ENCODE measurements at regions of chr2 and their contacts with region 1.

Region 1: DNA sequence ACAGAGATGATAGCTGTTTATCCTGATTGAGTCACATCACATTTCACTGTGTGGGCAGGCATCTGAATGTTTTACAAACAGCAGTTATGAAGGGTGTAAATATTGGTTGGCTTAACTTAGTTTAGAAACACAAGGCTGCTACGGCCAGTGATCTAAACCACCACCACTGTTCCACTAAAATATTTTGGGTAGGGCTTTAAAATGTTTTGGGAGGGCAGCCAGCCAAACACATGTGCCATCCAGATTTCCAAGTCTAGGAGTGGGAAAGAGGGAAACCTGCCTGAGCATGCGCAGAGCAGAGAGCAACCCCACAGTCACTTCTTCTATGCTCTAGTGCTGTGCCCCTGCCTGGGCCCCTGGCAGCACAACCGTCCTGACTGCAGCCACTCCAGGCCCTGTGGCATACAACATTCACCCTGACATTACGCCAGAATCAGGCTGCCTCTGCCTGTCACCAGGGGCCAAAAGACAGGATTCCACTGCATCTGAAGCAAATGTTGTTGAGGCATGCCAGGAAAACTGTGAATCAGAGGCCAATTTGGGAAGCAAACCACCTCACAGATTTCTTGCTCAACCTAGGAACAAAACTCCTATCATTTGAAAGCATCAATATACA is 74.8 kb upstream of the COL5A2 start:
- DNase-seq: peak; percentile 77 to 81
- ATAC-seq: peak; percentile 82
- H3K4me3 ChIP-seq: no peak overlapping the region
- H3K27ac ChIP-seq: peak overlapping the region in 1 of 2 donors; percentile 89
- H3K4me1 ChIP-seq: peaks cover 9 to 10% of the 10 kb centered on the region in 2 donors
- H3K27me3 ChIP-seq: no peaks in the 10 kb centered on the region

Region 2: DNA sequence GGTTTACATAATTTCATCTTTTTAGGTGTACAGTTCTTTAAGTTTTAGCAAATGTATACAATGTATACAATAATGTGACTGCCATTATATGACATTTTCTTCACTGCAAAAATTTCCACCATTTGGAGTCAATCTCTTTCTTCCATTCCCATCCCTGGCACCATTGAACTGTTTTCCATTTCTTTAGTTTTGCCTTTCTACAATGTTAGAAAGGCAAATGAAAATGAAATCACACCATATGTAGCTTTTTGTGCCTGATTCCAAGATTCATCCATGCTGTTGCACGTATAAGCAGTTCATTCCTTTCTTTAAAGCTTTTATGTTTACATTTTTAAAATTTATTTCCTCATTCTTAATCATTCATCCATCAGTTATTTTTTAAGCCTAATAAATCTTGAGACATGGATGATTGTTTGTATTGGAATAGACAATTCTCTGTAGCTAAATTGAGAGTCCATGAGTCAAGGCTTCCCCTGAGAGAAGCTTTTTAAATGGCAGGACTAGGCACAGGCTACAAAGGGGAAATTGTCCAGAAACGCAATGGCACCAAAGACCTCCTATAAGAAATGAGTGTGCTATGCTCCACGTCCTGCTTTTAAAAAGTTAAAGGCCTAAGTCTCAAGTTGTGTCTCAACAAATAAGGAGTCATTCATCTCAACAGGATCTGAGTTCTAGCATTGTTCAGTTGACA is 66.1 kb before region 1 on chr2:
- intact Hi-C with region 1: loop called in 1 of 2 experiments (anchors 5 kb)
- DNase-seq: no peak
- ATAC-seq: no peak
- H3K4me3 ChIP-seq: no peak overlapping the region
- H3K27ac ChIP-seq: peak overlapping the region in 1 of 2 donors; percentile 43
- H3K4me1 ChIP-seq: peaks cover 0 to 2% of the 10 kb centered on the region in 2 donors
- H3K27me3 ChIP-seq: no peaks in the 10 kb centered on the region

Region 3: GRCh38 chr2:189210250-189211075 is 43.9 kb before region 1 on chr2:
- intact Hi-C with region 1: loop called in 1 of 2 experiments (anchors 5 kb)
- DNase-seq: peak; percentile 79 to 80
- ATAC-seq: peak; percentile 90
- H3K4me3 ChIP-seq: peak overlapping the region in 1 of 2 donors; percentile 76
- H3K27ac ChIP-seq: peak overlapping the region; percentile 54 to 82
- H3K4me1 ChIP-seq: peaks cover 0 to 2% of the 10 kb centered on the region in 2 donors
- H3K27me3 ChIP-seq: no peaks in the 10 kb centered on the region

Measured in aorta (tissue), 5 donors.